HEK293 (cell line): ENCODE measurements at regions of chr9 and their contacts with region 1.

Region 1: GRCh38 chr9:2727966-2728613 is 10.8 kb downstream of the KCNV2 start:
- H3K4me3 ChIP-seq: no peak overlapping the region
- H3K27ac ChIP-seq: no peak overlapping the region
- H3K4me1 ChIP-seq: peaks cover 4% of the 10 kb centered on the region; the same call in 1 of the 2 replicates
- CTCF ChIP-seq: peak; percentile 81

Region 2: DNA sequence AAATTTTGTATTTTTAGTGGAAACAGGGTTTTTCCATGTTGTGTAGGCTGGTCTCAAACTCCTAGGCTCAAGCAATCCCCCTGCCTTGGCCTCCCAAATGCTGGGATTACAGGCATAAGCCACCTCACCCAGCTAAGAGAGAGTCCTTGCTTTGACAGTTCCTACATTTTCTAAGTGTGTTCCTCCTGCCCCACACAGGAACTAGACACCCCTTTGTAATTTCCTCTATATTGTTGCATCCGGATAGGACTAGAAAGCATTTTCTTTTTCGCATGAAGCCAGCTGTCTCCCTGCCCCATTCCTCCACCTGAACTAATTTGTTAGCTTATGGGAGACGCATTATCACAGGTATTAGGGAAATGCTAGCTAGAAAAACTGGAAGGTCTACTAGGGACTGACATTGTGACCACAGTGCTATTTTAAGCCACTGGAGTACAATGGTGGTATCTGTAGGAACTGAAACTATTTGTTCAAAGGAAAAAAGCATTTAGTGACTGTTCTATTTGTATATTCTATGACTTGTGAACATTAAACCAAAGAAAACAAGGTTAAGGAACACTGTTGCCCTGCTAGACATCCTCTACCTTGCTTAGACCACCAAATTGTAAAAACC is 498.9 kb before region 1 on chr9:
- CTCF ChIA-PET with region 1: interaction called, 10 read pairs
- POLR2A ChIA-PET with region 1: no interaction called
- H3K4me3 ChIP-seq: no peak overlapping the region
- H3K27ac ChIP-seq: no peak overlapping the region
- H3K4me1 ChIP-seq: no peaks in the 10 kb centered on the region
- CTCF ChIP-seq: no peak

Region 3: GRCh38 chr9:2389404-2389803 is 338.7 kb before region 1 on chr9:
- CTCF ChIA-PET with region 1: no interaction called
- POLR2A ChIA-PET with region 1: no interaction called
- H3K4me3 ChIP-seq: no peak overlapping the region
- H3K27ac ChIP-seq: no peak overlapping the region
- H3K4me1 ChIP-seq: peaks cover 12% of the 10 kb centered on the region
- CTCF ChIP-seq: no peak

Region 4: GRCh38 chr9:3828250-3828908 is 1100.3 kb after region 1 on chr9:
- CTCF ChIA-PET with region 1: no interaction called
- POLR2A ChIA-PET with region 1: no interaction called
- H3K4me3 ChIP-seq: no peak overlapping the region
- H3K27ac ChIP-seq: no peak overlapping the region
- H3K4me1 ChIP-seq: no peaks in the 10 kb centered on the region
- CTCF ChIP-seq: no peak